GM12878 (cell line): ENCODE measurements at regions of chr3 and their contacts with region 1.

Region 1: DNA sequence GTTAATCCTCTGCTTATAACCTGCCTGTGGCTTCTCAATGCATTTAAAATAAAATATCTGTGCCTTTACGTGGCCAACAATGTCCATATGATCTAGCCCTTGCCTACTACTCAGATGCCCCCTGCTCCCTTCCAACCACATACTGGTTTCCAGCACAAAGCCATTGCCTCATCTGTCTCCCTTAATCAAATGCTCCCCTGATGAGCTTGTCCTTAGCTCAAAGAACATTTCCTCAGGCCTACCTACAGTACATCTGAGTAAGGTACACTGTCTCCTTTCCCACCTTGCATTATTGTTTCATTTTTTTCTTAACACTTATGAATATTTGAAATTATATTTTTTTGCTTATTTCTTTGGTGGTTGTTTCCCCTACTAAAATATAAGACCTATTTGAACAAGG is 5.9 kb upstream of the TSC22D2 start:
- DNase-seq: no peak
- ATAC-seq: no peak
- H3K4me3 ChIP-seq: no peak overlapping the region
- H3K27ac ChIP-seq: no peak overlapping the region
- H3K4me1 ChIP-seq: no peaks in the 10 kb centered on the region
- H3K27me3 ChIP-seq: no peaks in the 10 kb centered on the region; a peak in 1 of 4 replicates
- CTCF ChIP-seq: no peak
- EP300 ChIP-seq: no peak
- POLR2A ChIP-seq: no peak
- RAD21 ChIP-seq: no peak

Region 2: GRCh38 chr3:150391200-150391599 is 11.0 kb before region 1 on chr3:
- CTCF ChIA-PET with region 1: interaction called, 33 read pairs
- POLR2A ChIA-PET with region 1: interaction called, 26 read pairs
- RAD21 ChIA-PET with region 1: interaction called, 46 read pairs
- SMC1A ChIA-PET with region 1: interaction called, 128 read pairs
- in situ Hi-C with region 1: no loop called
- intact Hi-C with region 1: no loop called
- DNase-seq: no peak
- ATAC-seq: no peak
- H3K4me3 ChIP-seq: no peak overlapping the region
- H3K27ac ChIP-seq: no peak overlapping the region
- H3K4me1 ChIP-seq: peaks cover 8% of the 10 kb centered on the region
- H3K27me3 ChIP-seq: no peaks in the 10 kb centered on the region
- CTCF ChIP-seq: no peak
- EP300 ChIP-seq: no peak
- POLR2A ChIP-seq: no peak
- RAD21 ChIP-seq: no peak